Activated CD4-positive, alpha-beta T cell treated with anti-CD3 and anti-CD28 coated beads for 36 hours (primary cell): ENCODE measurements at regions of chr2 and their contacts with region 1.

Region 1: DNA sequence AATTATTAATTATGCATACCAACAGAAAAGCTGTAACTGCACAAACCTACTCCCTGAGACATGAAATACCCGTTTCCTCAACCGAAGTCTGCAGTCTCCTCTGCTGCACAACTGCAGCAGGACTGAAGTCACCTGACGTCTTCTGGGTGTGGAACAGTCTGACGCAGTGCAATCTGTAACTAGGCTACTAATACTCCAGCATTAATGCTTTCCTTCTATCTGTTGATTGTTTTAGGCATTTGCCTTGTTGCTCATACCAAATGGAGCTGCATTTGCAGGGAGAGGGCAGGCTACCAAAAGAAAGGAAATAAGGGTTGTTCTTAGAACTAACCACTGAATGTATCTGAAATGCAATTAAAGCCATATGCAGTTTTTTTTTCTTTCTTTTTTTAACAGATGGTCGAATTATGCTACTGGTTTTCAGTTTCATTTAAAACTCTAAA is 40.1 kb downstream of the RTN4 start:
- DNase-seq: peak; percentile 49
- ATAC-seq: peak; percentile 86
- H3K4me3 Mint-ChIP-seq: peak overlapping the region; percentile 72
- H3K27ac Mint-ChIP-seq: peak overlapping the region; percentile 90
- H3K4me1 Mint-ChIP-seq: peaks cover 60% of the 10 kb centered on the region
- H3K27me3 Mint-ChIP-seq: no peaks in the 10 kb centered on the region

Region 2: GRCh38 chr2:54763636-54764291 is 246.4 kb before region 1 on chr2:
- CTCF ChIA-PET with region 1: no interaction called
- POLR2A ChIA-PET with region 1: no interaction called
- intact Hi-C with region 1: loop called in 1 of 2 experiments (anchors 5 kb)
- DNase-seq: peak; percentile 64
- ATAC-seq: peak; percentile 34
- H3K4me3 Mint-ChIP-seq: no peak overlapping the region
- H3K27ac Mint-ChIP-seq: no peak overlapping the region
- H3K4me1 Mint-ChIP-seq: peaks cover 13% of the 10 kb centered on the region
- H3K27me3 Mint-ChIP-seq: peaks cover 2% of the 10 kb centered on the region

Region 3: DNA sequence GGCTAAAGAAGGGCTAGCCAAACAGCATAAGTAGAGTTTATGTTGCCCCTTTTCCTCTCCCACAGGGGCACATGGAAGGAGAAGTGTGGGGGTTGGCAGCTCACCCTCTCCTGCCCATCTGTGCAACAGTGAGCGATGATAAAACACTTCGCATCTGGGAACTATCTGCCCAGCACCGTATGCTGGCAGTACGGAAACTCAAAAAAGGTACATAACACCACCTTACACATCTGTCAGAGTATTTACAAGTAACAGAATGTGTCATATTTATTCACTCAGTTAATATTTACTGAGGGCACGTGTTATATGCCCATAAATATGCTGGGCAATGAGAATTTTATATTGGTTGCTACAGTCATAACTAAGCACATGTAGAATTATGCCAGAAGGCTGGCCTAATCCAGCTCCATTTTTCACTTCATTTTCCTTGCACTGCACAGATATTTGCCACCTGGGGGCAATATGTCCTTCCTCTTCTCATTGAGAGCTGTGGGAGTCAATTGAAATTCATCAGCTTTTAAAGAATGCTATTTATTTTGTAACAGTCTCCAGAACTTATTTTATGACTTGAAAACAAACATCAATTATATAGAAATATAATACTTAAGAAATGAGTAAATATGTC is 110.5 kb before region 1 on chr2:
- CTCF ChIA-PET with region 1: interaction called, 3 read pairs
- POLR2A ChIA-PET with region 1: no interaction called
- intact Hi-C with region 1: loop called in 1 of 2 experiments (anchors 5 kb)
- DNase-seq: no peak
- ATAC-seq: no peak
- H3K4me3 Mint-ChIP-seq: no peak overlapping the region
- H3K27ac Mint-ChIP-seq: no peak overlapping the region
- H3K4me1 Mint-ChIP-seq: peaks cover 28% of the 10 kb centered on the region
- H3K27me3 Mint-ChIP-seq: no peaks in the 10 kb centered on the region

Region 4: GRCh38 chr2:55026202-55026601 is 16.0 kb after region 1 on chr2:
- CTCF ChIA-PET with region 1: interaction called, 4 read pairs
- POLR2A ChIA-PET with region 1: no interaction called
- intact Hi-C with region 1: loop called in 1 of 2 experiments (anchors 1 kb)
- DNase-seq: no peak
- ATAC-seq: peak; percentile 19
- H3K4me3 Mint-ChIP-seq: no peak overlapping the region
- H3K27ac Mint-ChIP-seq: peak overlapping the region; percentile 26
- H3K4me1 Mint-ChIP-seq: peaks cover 10% of the 10 kb centered on the region
- H3K27me3 Mint-ChIP-seq: no peaks in the 10 kb centered on the region